ENCODE measurements at regions of chr1 and their contacts with region 1.

Region 1: DNA sequence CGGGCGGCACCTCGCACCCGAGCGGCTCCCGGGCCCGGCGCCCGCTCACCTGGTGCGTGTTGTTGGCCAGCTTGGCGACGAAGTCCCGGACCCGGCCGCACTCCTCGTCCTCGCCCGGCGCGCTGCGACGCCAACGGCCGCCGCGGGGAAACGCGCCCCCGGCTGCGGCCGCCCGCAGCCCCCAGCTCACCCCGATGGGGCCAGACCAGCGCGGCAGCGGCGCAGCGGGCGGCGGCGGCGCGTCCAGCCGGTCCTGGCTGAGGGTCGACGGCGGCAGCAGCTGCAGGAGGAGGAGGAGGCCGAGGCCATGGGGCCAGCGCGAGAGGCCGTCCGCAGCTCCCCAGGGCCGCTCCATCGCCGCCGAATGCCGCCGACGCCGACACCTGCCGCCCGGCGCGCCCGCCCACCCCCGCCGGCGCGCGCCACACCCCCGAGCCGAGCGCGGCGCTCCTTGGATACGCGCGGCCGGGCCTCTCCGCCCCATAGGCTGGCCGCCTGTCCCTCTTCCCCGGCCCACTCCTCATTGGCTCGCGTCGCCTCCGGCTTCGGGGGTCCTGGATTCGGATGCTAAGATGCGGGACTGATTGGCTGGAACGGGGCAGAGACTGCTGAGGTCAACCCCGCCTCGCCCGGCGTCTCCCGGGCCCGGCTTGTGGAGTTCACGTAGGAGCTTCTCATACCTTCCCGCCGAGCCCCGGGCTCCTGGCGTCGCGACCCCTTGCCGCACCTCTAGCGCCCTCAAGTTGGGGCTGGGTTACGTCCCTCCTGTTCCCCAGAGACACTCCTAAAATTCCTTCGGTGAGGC is at the start of gene SORT1:
- DNase-seq: peak; percentile 78 to 87 (median 87)
- ATAC-seq: peak; percentile 91
- H3K4me3 ChIP-seq: peak within 1 kb of the TSS; percentile 65
- H3K4me1 ChIP-seq: peaks cover 33% of the 10 kb centered on the region
- CTCF ChIP-seq: no peak
- total RNA-seq, gene SORT1: 89.8 to 109 (median 107) TPM

Region 2: GRCh38 chr1:109201123-109201703 is 196.5 kb before region 1 on chr1:
- intact Hi-C with region 1: no loop called
- DNase-seq: peak in 1 of 3 donors; percentile 79
- ATAC-seq: peak; percentile 80
- H3K4me3 ChIP-seq: no peak overlapping the region
- H3K4me1 ChIP-seq: no peaks in the 10 kb centered on the region
- CTCF ChIP-seq: peak; percentile 22

Region 3: GRCh38 chr1:109248797-109249642 is 148.7 kb before region 1 on chr1 and contains the start of gene CELSR2:
- intact Hi-C with region 1: no loop called
- DNase-seq: peak; percentile 68 to 81 (median 73)
- ATAC-seq: peak; percentile 90
- H3K4me3 ChIP-seq: peak within 1 kb of the TSS; percentile 40
- H3K4me1 ChIP-seq: no peaks in the 10 kb centered on the region
- CTCF ChIP-seq: no peak
- total RNA-seq, gene CELSR2: 2.8 to 14.7 (median 3.2) TPM

Region 4: DNA sequence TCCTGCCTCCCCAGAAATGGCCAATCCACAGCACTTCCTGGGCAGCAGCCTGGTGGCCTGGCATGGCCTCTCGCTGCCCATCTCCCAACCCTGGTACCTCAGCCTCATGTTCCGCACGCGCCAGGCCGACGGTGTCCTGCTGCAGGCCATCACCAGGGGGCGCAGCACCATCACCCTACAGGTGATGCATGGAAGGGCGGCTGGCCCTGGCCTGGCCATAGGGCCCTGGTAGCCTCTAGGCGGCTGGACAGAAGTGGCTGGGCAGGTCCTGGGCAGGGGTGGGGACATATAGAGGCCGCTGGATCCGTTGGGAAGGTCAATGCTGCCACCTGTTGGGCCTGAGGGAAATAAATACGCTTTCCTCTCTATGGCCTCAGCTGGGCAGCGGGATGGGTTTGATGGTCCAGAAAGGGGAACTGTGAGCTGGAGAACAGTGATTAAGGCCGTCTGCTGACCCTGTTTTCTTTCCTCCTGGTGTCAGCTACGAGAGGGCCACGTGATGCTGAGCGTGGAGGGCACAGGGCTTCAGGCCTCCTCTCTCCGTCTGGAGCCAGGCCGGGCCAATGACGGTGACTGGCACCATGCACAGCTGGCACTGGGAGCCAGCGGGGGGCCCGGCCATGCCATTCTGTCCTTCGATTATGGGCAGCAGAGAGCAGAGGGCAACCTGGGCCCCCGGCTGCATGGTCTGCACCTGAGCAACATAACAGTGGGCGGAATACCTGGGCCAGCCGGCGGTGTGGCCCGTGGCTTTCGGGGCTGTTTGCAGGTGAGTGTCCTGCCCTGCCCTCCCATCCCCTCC is 133.9 kb before region 1 on chr1:
- intact Hi-C with region 1: loop called in 1 of 2 experiments (anchors 5 kb)
- DNase-seq: peak; percentile 86 to 90 (median 87)
- ATAC-seq: peak; percentile 95
- H3K4me3 ChIP-seq: no peak overlapping the region
- H3K4me1 ChIP-seq: no peaks in the 10 kb centered on the region
- CTCF ChIP-seq: peak; percentile 92

Region 5: DNA sequence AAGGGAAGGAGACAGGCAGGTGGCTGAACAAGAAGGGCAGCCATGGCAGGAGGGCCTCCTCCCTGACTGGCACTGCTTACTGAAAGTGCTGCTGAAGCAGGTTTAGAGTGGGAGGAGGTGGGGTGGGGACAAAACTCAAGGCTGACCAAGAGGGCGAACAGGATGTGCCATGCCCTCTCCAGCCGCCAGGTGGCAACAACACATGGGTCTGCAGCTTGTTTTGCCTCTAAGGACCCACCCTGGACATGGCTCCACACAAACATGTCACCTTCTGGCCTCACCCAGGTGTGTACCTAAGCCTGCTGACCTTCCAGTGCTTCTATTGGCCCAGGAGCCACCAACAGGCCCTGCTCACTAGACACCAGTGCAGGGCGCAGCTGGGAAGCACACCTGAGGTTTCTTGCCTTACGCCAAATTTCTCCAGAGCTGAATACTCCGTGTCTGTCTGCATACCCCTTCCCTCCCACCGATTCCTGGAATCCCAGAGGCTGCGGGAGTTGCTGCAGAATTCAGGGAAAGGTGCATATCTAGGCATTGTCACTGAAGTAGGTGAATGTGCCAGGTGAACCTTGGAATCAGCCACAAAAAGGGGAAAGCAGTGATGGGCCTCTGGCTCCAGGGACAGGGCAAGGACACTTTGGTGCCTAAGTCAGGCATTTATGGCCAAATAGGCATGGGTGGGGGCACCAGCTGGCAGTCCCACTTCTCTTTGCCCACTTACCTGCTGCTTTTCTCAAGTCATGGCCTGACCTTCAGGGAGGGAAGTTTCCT is 120.1 kb before region 1 on chr1:
- intact Hi-C with region 1: loop called in 1 of 2 experiments (anchors 5 kb)
- DNase-seq: peak; percentile 87 to 96 (median 93)
- ATAC-seq: peak; percentile 94
- H3K4me3 ChIP-seq: no peak overlapping the region
- H3K4me1 ChIP-seq: peaks cover 18% of the 10 kb centered on the region
- CTCF ChIP-seq: peak; percentile 91

Measured in mucosa of descending colon (tissue), 3 donors.